ENCODE measurements at regions of chr1 and their contacts with region 1.

Region 1: DNA sequence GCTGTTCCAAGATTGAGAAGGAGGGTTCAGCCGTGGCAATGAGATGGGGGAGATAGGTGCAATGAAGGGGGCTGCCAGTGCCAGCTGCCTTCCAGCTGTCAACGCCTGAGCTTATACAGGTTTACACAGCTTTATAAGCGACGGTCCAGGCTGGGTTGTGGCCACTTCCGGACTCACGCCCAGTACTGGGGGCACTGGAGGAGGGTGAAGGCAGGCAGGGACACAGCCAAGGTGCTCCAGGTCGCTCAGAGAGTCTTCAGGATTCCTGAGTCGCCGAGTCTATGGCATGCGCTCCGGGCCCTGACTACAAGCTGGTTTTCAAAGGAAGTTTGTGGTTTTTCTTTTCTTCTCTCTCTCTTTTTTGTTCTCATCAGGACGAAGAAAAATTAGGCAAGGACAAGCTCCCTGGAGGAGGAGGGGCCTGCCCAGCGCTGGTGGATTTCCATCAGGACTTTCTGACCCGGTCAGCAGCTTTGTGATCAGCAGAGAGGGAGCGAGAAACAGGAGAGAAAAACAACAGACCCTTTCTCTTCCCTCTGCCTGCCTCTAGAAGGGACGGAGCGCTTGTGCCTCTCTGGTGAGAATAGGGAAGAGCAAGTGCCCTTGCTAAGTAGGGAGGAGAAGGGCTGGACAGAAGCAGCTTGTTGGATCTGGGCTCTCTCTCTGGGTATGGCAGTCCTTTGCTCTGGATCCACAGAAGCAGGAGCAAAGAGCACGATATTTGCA is at the start of gene MINDY1:
- DNase-seq: no peak
- ATAC-seq: peak; percentile 88
- H3K4me3 ChIP-seq: peak within 1 kb of the TSS; percentile 91 to 95
- H3K27ac ChIP-seq: peak within 1 kb of the TSS; percentile 90
- H3K4me1 ChIP-seq: peaks cover 7% of the 10 kb centered on the region
- H3K27me3 ChIP-seq: no peaks in the 10 kb centered on the region
- CTCF ChIP-seq: peak; percentile 71; the same call in 1 of the 2 replicates
- total RNA-seq, gene MINDY1: 15.8 TPM

Region 2: DNA sequence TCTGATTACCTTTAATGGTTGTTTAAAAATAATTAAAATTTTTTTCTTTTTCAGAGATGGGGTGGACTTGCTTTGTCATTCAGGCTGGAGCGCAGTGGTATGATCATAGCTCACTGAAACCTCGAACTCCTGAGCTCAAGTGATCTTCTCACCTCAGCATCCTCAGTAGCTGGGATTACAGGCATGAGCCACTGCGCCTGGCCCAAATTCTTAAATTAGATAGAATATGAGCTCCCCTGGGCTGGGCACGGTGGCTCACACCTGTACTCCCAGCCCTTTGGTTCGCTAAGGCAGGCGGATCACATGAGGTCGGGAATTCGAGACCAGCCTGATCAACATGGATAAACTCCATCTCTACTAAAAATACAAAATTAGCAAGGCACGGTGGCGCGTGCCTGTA is 48.8 kb before region 1 on chr1:
- CTCF ChIA-PET with region 1: no interaction called
- POLR2A ChIA-PET with region 1: interaction called, 11 read pairs
- in situ Hi-C with region 1: no loop called
- intact Hi-C with region 1: no loop called
- DNase-seq: no peak
- ATAC-seq: no peak
- H3K4me3 ChIP-seq: no peak overlapping the region
- H3K27ac ChIP-seq: no peak overlapping the region
- H3K4me1 ChIP-seq: no peaks in the 10 kb centered on the region
- H3K27me3 ChIP-seq: no peaks in the 10 kb centered on the region
- CTCF ChIP-seq: no peak